ENCODE measurements at regions of chr9 and their contacts with region 1.

Region 1: DNA sequence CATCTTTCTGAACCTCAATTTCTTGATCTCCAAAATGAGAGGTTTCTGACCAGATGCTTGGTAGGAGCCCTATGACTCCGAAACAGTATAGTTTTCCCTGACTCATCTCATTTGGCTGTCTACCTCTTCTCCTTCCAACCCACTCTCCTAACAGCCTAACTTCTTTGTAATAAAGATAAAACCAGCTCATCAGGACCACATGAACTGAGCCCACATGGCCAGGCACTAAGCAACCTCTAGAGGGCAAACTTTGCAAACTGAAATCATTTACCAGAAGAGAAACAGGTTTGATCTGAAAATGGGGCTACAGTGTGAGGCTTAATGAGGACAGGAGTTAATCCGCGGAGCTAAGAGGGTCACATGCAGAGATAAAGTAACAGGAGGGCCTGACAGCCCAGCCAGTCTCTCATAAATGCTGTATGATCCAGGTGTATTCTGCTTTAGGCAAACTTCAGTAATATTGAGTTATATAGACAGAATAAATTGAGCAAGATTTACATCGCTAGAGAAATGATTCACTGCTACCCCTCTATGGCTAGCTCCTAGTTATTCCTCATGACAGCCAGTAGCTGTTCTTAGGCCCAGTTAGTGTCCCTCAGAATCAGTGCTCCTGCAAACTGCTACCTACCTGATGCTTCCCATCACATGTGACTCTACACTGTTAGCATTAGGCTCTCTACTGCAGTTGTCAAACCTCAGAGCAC is 64.6 kb downstream of the ABCA1 start:
- DNase-seq: peak; percentile 28
- H3K4me3 Mint-ChIP-seq: no peak overlapping the region
- H3K27ac Mint-ChIP-seq: peak overlapping the region; percentile 5
- H3K4me1 Mint-ChIP-seq: no peaks in the 10 kb centered on the region
- H3K27me3 Mint-ChIP-seq: no peaks in the 10 kb centered on the region

Region 2: DNA sequence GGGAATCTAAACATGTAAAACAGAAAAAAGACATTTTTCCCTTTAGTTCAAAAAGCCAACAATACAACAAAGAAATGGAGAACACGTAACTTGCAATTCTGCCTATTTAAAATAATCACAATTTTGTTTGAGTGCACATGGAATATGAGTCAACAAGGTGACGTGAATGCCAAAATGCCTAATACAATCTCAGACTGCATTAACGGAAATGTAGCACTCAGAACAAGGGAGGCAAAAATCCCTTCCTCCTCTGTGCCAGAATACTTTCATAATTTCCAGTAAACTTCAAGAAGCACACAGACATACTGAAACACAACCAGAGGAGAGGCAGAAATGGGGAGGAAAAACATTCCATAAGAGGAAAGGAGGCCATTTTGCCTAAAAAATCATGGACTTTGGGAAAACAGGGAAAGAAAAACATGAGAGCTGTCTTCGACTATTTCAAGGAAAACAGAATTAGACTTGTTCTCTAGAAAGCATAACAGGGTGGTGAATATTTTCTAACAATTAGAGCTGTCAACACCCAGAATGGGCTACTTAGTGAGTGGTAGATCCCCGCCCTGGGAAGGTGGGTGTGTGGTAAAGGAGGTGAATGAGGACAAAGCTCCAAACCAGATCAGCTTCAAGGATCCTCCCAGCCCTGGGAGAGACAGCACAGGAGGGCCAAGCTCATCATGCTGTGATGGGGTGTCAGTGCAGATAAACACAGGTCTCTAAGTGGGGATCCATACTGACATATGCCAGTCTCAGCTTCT is 16.4 kb after region 1 on chr9:
- intact Hi-C with region 1: no loop called
- DNase-seq: no peak
- H3K4me3 Mint-ChIP-seq: no peak overlapping the region
- H3K27ac Mint-ChIP-seq: no peak overlapping the region
- H3K4me1 Mint-ChIP-seq: no peaks in the 10 kb centered on the region
- H3K27me3 Mint-ChIP-seq: no peaks in the 10 kb centered on the region

Region 3: GRCh38 chr9:104968025-104968982 is 105.0 kb after region 1 on chr9:
- intact Hi-C with region 1: loop called (anchors 1 kb)
- DNase-seq: peak; percentile 84
- H3K4me3 Mint-ChIP-seq: peak overlapping the region; percentile 92
- H3K27ac Mint-ChIP-seq: peak overlapping the region; percentile 66
- H3K4me1 Mint-ChIP-seq: peaks cover 13% of the 10 kb centered on the region
- H3K27me3 Mint-ChIP-seq: peaks cover 21% of the 10 kb centered on the region

Region 4: DNA sequence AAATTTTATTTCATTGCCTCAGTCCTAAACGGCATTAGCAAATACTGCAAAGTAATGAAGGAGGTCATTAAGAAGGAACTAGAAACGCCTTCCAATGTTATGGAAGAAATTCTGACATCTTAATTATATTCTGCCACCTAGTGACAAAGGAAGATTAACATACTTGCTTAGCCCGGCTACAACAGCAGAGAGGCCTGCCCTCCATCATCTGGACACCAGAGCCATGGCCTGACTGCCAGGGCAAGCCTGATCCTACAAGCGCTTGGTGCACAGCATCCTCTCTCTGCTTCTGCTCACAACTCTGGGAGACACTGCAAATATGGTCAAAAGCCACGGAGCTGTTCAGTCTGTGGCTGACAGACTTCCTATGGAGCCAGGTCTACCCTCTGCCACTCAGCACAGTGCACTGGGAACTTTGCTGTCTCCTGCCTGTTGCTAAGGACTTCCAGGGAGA is 293.8 kb after region 1 on chr9:
- intact Hi-C with region 1: loop called (anchors 1 kb)
- DNase-seq: no peak
- H3K4me3 Mint-ChIP-seq: no peak overlapping the region
- H3K27ac Mint-ChIP-seq: no peak overlapping the region
- H3K4me1 Mint-ChIP-seq: peaks cover 6% of the 10 kb centered on the region
- H3K27me3 Mint-ChIP-seq: no peaks in the 10 kb centered on the region

Region 5: DNA sequence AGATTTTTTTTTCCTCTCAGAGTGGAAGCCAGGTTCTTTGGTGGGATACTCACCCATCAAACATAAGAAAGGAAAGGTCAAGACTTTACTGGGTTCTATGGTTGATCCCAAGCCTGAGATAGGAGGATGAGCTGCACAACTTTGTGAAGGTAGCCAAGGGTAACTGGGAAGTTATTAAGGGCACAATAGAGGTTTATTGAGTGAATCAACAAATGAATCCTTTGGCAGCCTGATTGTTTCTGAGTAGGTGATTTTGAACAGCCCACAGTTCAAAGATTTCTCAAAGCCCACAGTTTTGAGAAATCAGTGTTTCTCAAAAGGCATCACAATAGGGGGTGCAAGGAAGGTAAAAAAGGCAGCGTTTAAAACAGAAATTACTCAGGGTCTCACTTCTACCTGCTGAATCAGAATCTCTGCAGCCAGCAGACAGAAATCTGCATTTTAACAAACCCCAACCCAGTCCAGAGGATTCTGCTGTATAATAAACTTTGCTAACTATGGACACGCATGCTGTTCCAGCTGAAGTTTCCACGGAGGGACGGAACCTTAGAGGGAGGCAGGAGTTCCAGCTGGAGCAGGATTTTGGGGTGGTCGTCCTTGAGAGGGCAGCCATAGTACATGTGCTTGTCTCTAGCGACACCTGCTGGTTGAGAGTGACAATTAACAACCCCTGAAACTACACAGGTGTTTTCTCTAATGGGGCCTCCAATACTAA is 551.8 kb after region 1 on chr9:
- intact Hi-C with region 1: loop called (anchors 1 kb)
- DNase-seq: peak; percentile 25
- H3K4me3 Mint-ChIP-seq: no peak overlapping the region
- H3K27ac Mint-ChIP-seq: no peak overlapping the region
- H3K4me1 Mint-ChIP-seq: peaks cover 13% of the 10 kb centered on the region
- H3K27me3 Mint-ChIP-seq: peaks cover 46% of the 10 kb centered on the region